ENCODE measurements at regions of chr11 and their contacts with region 1.

Region 1: DNA sequence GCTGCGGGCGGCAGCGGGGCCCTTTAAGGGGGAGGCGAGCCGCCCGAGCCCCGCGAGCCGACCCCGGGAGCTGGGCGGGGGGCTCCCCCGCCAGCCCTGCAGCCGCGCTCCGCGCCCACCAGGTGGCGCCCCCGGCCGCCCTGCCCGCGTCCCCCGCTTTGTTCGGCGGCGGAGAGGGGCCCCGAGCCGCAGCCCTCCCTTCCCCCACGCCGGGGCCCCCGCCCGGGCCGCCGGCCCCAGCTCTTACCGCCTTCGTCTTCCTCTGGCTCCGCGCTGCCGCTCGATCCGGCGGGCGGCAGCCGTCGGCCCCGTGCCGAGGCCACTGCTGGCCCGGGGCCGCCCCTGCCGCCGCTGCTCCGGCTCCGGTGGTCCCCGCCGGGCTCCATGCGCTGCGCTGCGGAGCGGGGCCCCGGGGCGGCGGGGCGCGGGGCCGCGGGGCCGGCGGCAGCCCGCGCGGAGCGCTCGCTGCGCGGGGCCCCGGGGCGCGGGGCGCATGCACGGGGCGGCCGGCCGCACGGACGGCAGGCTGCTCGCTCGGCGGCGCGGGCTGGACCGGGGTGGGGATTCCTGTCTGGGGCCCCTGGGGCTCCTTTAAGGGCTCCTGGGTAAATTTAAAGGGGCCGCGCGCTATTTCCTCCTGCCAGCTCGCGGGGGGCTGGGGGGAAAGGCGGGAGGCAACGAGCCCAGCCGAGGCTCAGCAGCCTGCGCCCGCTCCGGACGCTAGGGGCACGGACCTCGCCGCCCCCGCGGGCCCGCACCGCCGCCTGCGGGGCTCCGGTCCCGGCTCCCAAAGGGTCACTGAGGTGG is at the start of gene ZFTA:
- DNase-seq: no peak
- H3K4me3 ChIP-seq: peak within 1 kb of the TSS; percentile 47 to 98 (median 82)
- H3K27ac ChIP-seq: peak within 1 kb of the TSS; percentile 74 to 89 (median 84)
- H3K4me1 ChIP-seq: peaks cover 14 to 63% (median 36%) of the 10 kb centered on the region in 3 donors
- H3K27me3 ChIP-seq: peaks cover 0 to 11% (median 0%) of the 10 kb centered on the region in 4 donors
- CTCF ChIP-seq: peak; percentile 7 to 95 (median 90)
- POLR2A ChIP-seq: no peak
- total RNA-seq, gene ZFTA: 2.9 to 12.0 (median 4.6) TPM

Region 2: GRCh38 chr11:63813035-63813562 is 44.7 kb after region 1 on chr11 and contains the start of gene SPINDOC:
- intact Hi-C with region 1: loop called (anchors 10 kb)
- DNase-seq: no peak
- H3K4me3 ChIP-seq: peak within 1 kb of the TSS; percentile 60 to 97 (median 83)
- H3K27ac ChIP-seq: peak within 1 kb of the TSS; percentile 81 to 88 (median 86)
- H3K4me1 ChIP-seq: peaks cover 6 to 35% (median 19%) of the 10 kb centered on the region in 3 donors
- H3K27me3 ChIP-seq: no peaks in the 10 kb centered on the region
- CTCF ChIP-seq: no peak
- POLR2A ChIP-seq: peak in 2 of 4 donors; percentile 13 to 49
- total RNA-seq, gene SPINDOC: 3.4 to 8.8 (median 6.1) TPM

Region 3: GRCh38 chr11:63837027-63837688 is 68.7 kb after region 1 on chr11:
- intact Hi-C with region 1: no loop called
- DNase-seq: no peak
- H3K4me3 ChIP-seq: no peak overlapping the region
- H3K27ac ChIP-seq: peak overlapping the region; percentile 79 to 96 (median 95)
- H3K4me1 ChIP-seq: peaks cover 24 to 39% (median 26%) of the 10 kb centered on the region in 3 donors
- H3K27me3 ChIP-seq: no peaks in the 10 kb centered on the region
- CTCF ChIP-seq: peak; percentile 68 to 96 (median 92)
- POLR2A ChIP-seq: no peak

Region 4: DNA sequence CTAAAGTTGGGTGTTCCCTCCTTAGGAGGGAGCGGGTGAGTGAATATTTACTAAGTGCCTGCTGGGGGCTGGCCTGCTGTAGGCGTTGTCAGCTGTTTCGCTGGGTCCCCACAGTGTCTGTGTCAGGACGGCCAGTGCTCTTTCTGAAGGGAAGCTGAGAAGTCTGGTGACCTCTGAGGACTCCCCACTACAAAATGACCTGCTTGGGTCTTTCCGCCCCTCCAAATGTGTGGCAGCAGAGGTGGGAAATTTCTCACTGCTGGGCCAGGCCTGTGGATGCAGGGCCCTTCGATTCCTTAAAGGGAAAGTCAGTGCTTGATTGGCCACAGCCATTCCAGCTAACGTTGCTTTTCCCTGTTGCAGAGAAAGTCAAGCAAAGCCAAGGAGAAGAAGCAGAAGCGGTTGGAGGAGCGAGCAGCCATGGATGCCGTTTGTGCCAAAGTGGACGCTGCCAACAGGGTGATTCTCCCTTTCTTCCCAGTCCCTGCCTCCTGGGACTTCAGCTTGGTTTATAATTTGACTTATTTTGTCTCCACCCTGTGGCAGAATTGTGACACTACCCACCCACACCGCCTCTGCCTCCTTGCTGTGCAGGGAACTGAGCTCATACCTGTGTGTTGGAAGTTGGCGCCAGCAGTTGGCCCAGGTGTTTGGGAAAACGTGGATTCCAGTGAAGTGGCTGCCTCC is 177.2 kb after region 1 on chr11:
- intact Hi-C with region 1: loop called (anchors 10 kb)
- DNase-seq: no peak
- H3K4me3 ChIP-seq: peak overlapping the region in 2 of 4 donors; percentile 2 to 39
- H3K27ac ChIP-seq: peak overlapping the region; percentile 33 to 65 (median 55)
- H3K4me1 ChIP-seq: peaks cover 9 to 36% (median 12%) of the 10 kb centered on the region in 3 donors
- H3K27me3 ChIP-seq: no peaks in the 10 kb centered on the region
- CTCF ChIP-seq: peak; percentile 50 to 87 (median 83)
- POLR2A ChIP-seq: no peak

Measured in esophagus squamous epithelium (tissue), 5 donors.